ENCODE measurements at regions of chr4 and their contacts with region 1.

Region 1: DNA sequence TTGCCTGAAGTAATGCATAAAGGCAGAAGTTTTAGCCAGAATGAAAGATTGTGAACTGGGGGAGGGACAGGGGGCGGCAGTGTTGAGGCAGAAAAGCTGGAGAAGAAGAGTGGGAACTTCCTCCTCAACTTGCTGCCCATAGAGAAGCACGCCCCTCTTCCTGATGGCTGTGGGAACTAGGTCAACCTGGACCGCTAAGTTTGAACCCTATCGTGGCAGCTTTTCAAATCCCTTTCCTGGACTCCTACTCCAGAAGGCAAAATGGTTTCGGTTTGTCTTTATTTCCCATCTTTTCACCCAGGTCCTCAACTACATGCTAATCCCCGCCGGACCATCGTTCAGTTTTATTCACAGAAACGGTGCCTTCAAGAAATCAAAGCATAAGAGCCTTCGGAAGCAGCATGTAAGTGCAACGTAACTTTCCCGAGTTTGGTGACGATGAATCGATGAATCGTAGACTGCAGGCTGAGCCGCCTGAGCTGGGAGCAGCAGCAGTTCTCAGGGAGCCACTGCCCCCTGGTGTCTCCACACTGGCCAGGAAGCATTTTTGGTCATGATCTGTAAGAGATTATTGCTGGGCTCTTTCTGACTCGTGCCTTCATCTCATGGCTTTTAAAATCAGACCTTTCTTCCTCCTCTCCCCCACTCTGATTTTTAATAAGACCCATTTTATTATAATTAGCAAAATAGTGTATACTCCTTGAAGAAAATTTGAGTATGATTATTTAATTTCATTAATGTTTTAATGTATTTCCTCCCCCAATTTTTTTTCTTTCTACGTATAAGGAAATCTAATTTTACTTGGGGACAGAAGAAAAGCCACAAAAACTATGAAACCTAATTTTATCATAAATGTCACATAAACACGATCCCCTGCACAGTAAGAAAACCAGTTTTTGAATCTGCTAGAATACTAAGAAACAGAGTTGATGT is 21.4 kb downstream of the SPINK2 start:
- DNase-seq: peak; percentile 85
- ATAC-seq: peak; percentile 98 to 99

Region 2: DNA sequence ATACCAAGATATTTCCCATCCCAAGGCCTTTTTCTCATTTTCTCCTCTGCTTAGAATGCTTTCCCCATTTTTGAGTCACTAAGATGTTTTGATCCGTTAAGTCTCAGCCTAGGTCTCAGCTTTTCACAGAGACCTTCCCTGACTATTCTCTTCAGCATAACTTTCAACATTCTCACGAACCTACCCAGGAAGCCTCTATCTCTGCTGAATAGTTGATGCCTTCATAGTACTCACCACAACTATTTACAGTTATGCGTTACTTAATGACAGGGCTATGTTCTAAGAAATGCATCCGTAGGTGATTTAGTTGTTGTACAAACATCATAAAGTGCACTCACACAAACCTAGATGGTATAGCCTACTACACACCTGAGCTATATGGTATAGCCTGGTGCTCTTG is 230.0 kb before region 1 on chr4:
- intact Hi-C with region 1: loop called in 1 of 2 experiments (anchors 5 kb)
- DNase-seq: no peak
- ATAC-seq: no peak

Region 3: DNA sequence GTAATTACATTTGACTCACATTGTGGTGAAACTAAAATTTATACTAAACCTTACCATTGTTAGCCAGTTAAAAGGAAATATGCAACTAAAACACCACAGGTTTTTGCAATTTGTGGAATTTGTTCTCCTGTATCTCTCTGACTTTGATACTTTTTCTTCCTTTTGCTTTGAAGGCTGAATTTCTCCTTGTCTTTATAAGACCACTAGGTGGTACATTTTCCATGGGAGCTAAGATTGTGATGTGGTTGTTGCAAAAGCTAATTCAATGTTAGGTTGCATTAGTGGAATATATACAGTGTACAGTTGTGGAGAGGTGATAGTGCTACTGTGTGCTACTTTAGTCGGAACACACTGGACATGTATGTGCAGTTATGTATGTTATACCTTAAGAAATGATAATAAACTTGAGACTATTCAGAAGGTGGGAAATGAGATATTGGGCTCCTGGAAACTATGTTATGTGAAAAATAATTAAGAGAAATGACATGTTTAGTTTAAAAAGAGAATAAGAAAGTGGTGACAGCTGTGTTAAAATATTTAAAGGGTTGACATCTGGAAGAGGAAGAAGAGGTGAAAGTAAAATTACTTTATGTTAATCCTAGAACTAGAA is 224.2 kb before region 1 on chr4:
- intact Hi-C with region 1: loop called (anchors 2 to 5 kb)
- DNase-seq: no peak
- ATAC-seq: peak in 1 of 2 donors; percentile 38

Region 4: DNA sequence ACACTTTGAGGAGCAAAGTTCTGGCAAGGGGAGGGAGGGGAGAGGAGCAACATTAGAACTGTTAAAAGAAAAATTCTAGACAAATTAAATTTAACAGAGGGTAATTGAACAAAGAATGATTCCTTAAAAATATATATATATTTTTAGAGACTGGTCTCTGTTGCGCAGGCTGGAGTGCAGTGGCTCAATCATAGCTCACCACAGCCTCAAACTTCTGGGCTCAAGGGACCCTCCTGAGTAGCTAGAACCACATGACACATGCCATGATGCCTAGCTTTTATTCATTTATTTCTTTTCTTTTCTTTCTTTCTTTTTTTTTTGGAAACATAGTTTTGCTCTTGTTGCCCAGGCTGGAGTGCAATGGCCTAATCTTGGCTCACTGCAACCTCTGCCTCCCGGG is 40.5 kb after region 1 on chr4:
- intact Hi-C with region 1: no loop called
- DNase-seq: no peak
- ATAC-seq: no peak

Region 5: DNA sequence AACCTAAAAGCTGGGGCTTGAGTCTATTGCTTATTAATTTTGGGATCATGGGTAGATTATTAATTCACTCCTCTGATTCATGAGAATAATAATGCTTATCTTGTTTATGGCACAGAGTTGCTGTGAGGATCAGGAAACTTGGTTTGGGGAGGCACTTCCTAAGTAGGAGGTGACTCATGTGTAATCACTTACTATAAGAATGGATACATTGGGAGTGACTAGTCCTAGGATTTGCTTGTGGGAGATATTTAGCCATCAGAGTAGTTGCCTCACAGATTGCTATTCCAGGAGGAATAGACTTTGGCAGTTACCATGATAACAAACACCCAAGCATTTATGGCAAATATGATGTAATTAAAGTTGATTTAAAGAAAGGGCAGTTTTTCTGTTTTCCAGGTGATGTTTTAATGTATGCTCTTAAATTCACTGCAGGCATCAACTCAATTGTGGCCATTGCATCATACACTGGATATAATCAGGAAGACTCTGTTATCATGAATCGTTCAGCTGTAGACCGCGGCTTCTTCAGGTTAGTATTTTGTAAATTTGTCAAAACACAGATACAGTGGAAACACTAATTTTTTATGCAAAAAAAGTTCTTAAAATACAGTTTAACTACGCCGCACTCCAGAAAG is 220.5 kb after region 1 on chr4:
- intact Hi-C with region 1: no loop called
- DNase-seq: no peak
- ATAC-seq: peak in 1 of 2 donors; percentile 72